AG04450 (cell line): ENCODE measurements at regions of chr11 and their contacts with region 1.

Region 1: GRCh38 chr11:8099291-8099899 is 18.4 kb downstream of the TUB start:
- DNase-seq: peak; percentile 65
- H3K4me3 ChIP-seq: no peak overlapping the region
- H3K27ac ChIP-seq: no peak overlapping the region
- H3K27me3 ChIP-seq: no peaks in the 10 kb centered on the region
- CTCF ChIP-seq: peak; percentile 93

Region 2: GRCh38 chr11:7904914-7905313 is 194.5 kb before region 1 on chr11:
- CTCF ChIA-PET with region 1: interaction called, 17 read pairs
- POLR2A ChIA-PET with region 1: no interaction called
- DNase-seq: peak; percentile 37
- H3K4me3 ChIP-seq: no peak overlapping the region
- H3K27ac ChIP-seq: peak overlapping the region; percentile 31
- H3K27me3 ChIP-seq: no peaks in the 10 kb centered on the region
- CTCF ChIP-seq: peak; percentile 61

Region 3: GRCh38 chr11:7999795-8000194 is 99.6 kb before region 1 on chr11:
- CTCF ChIA-PET with region 1: interaction called, 992 read pairs
- POLR2A ChIA-PET with region 1: no interaction called
- DNase-seq: no peak
- H3K4me3 ChIP-seq: no peak overlapping the region
- H3K27ac ChIP-seq: no peak overlapping the region
- H3K27me3 ChIP-seq: no peaks in the 10 kb centered on the region
- CTCF ChIP-seq: no peak

Region 4: DNA sequence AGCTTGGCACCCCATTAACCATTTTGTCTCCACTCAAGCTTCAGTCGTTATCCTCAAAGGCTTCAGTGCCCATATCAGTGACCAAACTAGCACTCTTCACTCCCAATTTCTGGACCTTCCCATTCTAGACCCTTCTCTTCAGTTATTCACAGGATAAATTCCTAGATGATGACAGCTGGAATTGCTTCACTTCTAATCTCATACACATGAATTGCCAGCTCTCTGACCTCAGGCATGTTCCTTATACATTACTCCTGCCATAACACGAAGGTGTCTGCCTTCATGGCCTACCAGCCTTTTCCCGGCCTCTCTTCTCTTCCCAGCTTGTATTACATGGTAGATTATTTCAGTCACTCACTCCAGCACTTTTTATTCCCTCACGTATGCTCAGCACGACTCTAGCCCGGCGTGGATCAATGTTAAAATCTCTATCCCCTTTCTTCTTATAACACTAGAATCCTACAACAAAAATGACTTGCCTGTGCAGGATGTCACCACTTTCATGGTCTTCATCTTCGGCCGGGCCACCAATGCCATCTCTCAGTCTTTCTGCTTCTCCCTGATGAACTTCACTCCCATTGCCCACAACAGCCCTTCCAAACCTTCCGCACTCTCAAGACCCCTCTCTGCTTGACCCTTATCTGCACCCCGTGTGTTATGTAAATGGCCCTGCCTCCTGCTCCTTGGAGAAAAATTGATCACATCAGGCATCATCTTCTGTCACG is 75.4 kb before region 1 on chr11:
- CTCF ChIA-PET with region 1: interaction called, 384 read pairs
- POLR2A ChIA-PET with region 1: no interaction called
- DNase-seq: no peak
- H3K4me3 ChIP-seq: no peak overlapping the region
- H3K27ac ChIP-seq: no peak overlapping the region
- H3K27me3 ChIP-seq: no peaks in the 10 kb centered on the region
- CTCF ChIP-seq: no peak

Region 5: DNA sequence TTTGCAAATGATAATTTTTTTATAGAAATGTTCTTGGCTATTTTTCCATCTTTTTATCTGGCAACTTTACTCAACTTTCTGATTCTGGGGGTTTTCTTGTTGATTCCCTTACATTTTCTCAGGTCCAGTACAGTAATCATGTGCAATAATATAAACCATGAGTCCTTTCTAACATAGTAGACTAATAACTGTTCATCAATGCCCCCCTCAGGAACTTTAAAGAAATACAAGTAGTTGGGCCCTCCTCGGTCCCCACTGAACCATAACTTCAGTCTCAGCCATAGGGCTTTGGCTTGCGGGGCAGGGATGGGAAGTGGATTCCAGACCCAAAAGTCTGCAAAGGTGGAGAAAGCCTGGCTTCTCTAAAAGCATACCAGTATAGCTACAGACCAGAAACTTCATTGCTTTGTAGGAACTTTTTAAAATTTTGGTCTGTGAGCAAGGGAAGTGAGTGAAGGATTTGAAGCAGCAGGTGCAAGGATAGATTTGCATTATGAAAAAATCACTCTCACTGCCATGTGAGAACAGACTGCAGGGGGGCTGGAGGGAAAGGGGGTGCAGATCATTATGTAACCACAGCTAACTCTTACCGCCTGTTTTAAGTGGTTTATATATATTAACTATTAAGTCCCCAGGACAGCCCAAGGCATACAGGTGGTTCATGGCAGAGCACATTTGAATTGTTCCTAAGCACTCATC is 28.8 kb before region 1 on chr11:
- CTCF ChIA-PET with region 1: interaction called, 19 read pairs
- POLR2A ChIA-PET with region 1: no interaction called
- DNase-seq: no peak
- H3K4me3 ChIP-seq: no peak overlapping the region
- H3K27ac ChIP-seq: no peak overlapping the region
- H3K27me3 ChIP-seq: peaks cover 2% of the 10 kb centered on the region
- CTCF ChIP-seq: peak; percentile 53

Region 6: GRCh38 chr11:8111636-8112035 is 12.2 kb after region 1 on chr11:
- CTCF ChIA-PET with region 1: interaction called, 96 read pairs
- POLR2A ChIA-PET with region 1: no interaction called
- DNase-seq: no peak
- H3K4me3 ChIP-seq: no peak overlapping the region
- H3K27ac ChIP-seq: no peak overlapping the region
- H3K27me3 ChIP-seq: peaks cover 7% of the 10 kb centered on the region
- CTCF ChIP-seq: no peak